AG04449 (cell line): ENCODE measurements at regions of chr5 and their contacts with region 1.

Region 1: GRCh38 chr5:133423618-133424282 is 188.6 kb downstream of the FSTL4 start:
- DNase-seq: no peak
- H3K4me3 ChIP-seq: no peak overlapping the region
- CTCF ChIP-seq: peak; percentile 89

Region 2: GRCh38 chr5:133287500-133287899 is 136.2 kb before region 1 on chr5:
- CTCF ChIA-PET with region 1: no interaction called
- POLR2A ChIA-PET with region 1: no interaction called
- DNase-seq: no peak
- H3K4me3 ChIP-seq: no peak overlapping the region
- CTCF ChIP-seq: peak; percentile 78

Region 3: DNA sequence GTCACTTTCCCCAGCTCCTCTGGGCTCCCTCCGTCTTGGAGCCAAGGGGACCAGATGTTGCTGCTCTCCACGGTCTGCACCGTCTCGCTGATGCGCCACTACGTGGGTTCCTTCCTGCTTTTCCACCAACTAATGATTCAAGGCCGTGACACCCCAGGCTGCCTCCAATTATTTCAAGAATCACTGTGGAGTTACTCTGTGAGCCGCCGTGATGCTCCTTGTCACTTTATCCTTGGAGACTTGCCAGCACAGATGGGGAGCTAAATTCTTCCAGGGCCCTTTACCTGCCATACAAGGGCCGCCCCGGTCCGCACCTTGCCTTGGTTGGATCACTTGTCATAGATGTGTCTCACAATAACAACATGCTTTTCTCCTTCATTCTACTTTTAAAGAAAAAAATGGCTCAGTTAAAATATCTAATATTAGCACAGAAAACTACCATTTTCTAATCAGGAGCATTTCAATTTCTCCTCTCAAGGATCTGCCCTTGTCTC is 13.4 kb before region 1 on chr5:
- CTCF ChIA-PET with region 1: interaction called, 11 read pairs
- POLR2A ChIA-PET with region 1: no interaction called
- DNase-seq: no peak
- H3K4me3 ChIP-seq: no peak overlapping the region
- CTCF ChIP-seq: no peak